ENCODE measurements at regions of chr14 and their contacts with region 1.

Region 1: GRCh38 chr14:41285186-41285748 is 321.4 kb upstream of the LRFN5 start:
- DNase-seq: peak; percentile 33 to 71 (median 62)
- H3K4me3 ChIP-seq: no peak overlapping the region
- H3K27ac ChIP-seq: no peak overlapping the region
- H3K4me1 ChIP-seq: no peaks in the 10 kb centered on the region
- H3K27me3 ChIP-seq: no peaks in the 10 kb centered on the region
- CTCF ChIP-seq: no peak
- POLR2A ChIP-seq: no peak

Region 2: GRCh38 chr14:41154143-41154807 is 131.0 kb before region 1 on chr14:
- intact Hi-C with region 1: no loop called
- DNase-seq: no peak
- H3K4me3 ChIP-seq: no peak overlapping the region
- H3K27ac ChIP-seq: no peak overlapping the region
- H3K4me1 ChIP-seq: no peaks in the 10 kb centered on the region
- H3K27me3 ChIP-seq: no peaks in the 10 kb centered on the region
- CTCF ChIP-seq: no peak
- POLR2A ChIP-seq: no peak

Region 3: GRCh38 chr14:41374092-41374491 is 88.8 kb after region 1 on chr14:
- intact Hi-C with region 1: no loop called
- DNase-seq: no peak
- H3K4me3 ChIP-seq: no peak overlapping the region
- H3K27ac ChIP-seq: no peak overlapping the region
- H3K4me1 ChIP-seq: no peaks in the 10 kb centered on the region
- H3K27me3 ChIP-seq: no peaks in the 10 kb centered on the region
- CTCF ChIP-seq: no peak
- POLR2A ChIP-seq: no peak

Region 4: GRCh38 chr14:41476526-41476925 is 191.3 kb after region 1 on chr14:
- intact Hi-C with region 1: no loop called
- DNase-seq: no peak
- H3K4me3 ChIP-seq: no peak overlapping the region
- H3K27ac ChIP-seq: no peak overlapping the region
- H3K4me1 ChIP-seq: no peaks in the 10 kb centered on the region
- H3K27me3 ChIP-seq: no peaks in the 10 kb centered on the region
- CTCF ChIP-seq: no peak
- POLR2A ChIP-seq: no peak

Region 5: DNA sequence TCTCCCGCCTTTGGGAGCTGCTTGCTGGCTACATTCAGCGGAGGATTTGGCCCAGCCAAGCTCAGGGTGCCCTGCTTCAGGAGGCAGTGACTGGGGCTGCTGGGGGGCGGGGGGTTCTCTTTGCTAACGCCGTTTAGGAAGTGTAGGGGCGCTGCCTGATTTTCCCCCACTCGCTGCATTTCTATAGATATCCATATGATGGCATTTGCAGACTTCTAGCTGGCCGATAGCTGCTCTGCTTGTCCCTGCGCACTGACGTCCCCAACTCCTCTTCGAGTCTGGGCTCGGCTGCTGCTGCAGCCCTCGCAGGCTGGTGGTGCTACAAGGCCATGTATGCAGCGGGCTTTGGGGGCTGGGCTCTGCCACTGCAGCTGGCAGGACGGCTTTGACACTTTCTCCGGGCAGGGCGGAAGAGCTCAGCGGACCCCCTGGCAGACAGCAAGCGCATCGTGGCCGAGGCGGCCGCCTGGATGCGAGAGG is 324.5 kb after region 1 on chr14:
- intact Hi-C with region 1: loop called in 1 of 2 experiments (anchors 10 kb)
- DNase-seq: peak; percentile 76 to 90 (median 83)
- H3K4me3 ChIP-seq: peak overlapping the region in 2 of 4 donors; percentile 27 to 84
- H3K27ac ChIP-seq: peak overlapping the region in 3 of 5 donors; percentile 21 to 77 (median 42)
- H3K4me1 ChIP-seq: no peaks in the 10 kb centered on the region
- H3K27me3 ChIP-seq: no peaks in the 10 kb centered on the region
- CTCF ChIP-seq: peak in 5 of 6 experiments; percentile 27 to 56 (median 42)
- POLR2A ChIP-seq: peak in 1 of 2 donors; percentile 27